ENCODE measurements at regions of chr12 and their contacts with region 1.

Region 1: GRCh38 chr12:27733052-27733656 is 22.5 kb downstream of the MRPS35 start:
- DNase-seq: no peak
- ATAC-seq: peak; percentile 83
- H3K4me3 ChIP-seq: no peak overlapping the region
- H3K27ac ChIP-seq: no peak overlapping the region
- H3K4me1 ChIP-seq: no peaks in the 10 kb centered on the region
- H3K27me3 ChIP-seq: no peaks in the 10 kb centered on the region
- CTCF ChIP-seq: peak; percentile 70 to 86 (median 81)
- EP300 ChIP-seq: no peak
- POLR2A ChIP-seq: no peak
- RAD21 ChIP-seq: peak; percentile 96

Region 2: GRCh38 chr12:27779920-27780611 is 46.9 kb after region 1 on chr12 and contains the starts of genes KLHL42 and MANSC4:
- CTCF ChIA-PET with region 1: interaction called, 4 read pairs
- POLR2A ChIA-PET with region 1: no interaction called
- RAD21 ChIA-PET with region 1: interaction called, 3 read pairs
- SMC1A ChIA-PET with region 1: no interaction called
- in situ Hi-C with region 1: no loop called
- intact Hi-C with region 1: loop called (anchors 1 kb)
- DNase-seq: no peak
- ATAC-seq: peak; percentile 86
- H3K4me3 ChIP-seq: peak within 1 kb of the TSS; percentile 96
- H3K27ac ChIP-seq: peak within 1 kb of the TSS; percentile 72
- H3K4me1 ChIP-seq: peaks cover 4% of the 10 kb centered on the region
- H3K27me3 ChIP-seq: no peaks in the 10 kb centered on the region
- CTCF ChIP-seq: peak; percentile 12 to 14 (median 13); a peak in 2 of 6 replicates
- EP300 ChIP-seq: no peak
- POLR2A ChIP-seq: peak; percentile 84
- RAD21 ChIP-seq: no peak
- polyA plus RNA-seq, gene KLHL42: 2.1 to 2.5 TPM
- polyA plus RNA-seq, gene MANSC4: 0.18 TPM in 1 of 2 experiments, not detected in the other

Region 3: DNA sequence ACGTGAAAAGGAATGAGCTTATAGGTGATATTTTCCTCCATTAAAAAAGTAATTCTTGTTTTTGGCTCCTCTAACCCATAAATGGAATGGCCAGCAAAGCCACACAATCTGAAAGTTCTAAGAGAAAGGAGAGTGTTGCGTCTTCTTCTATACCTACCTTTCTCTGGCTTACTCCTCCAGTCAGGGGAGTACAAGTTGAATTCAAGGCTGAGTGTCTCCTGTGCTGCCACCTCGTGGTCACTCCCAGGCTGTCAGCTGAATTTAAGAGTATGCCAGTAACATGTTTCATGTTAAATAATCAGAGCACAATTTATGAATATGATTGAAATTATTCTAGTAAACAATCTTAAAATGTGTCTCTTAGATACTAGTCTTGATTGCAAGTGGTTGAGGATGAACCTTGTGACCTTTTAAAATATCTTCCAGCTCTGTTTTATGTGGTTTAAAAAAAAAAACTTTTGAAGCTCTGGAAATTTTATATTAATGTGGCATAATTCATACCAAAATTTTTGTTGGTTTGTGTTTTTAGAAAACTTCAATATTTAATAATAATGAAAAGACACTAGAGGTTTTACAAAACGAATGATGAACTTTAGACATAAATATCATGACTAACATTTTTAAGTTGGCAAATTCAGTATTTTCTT is 207.7 kb after region 1 on chr12:
- CTCF ChIA-PET with region 1: interaction called, 101 read pairs
- POLR2A ChIA-PET with region 1: interaction called, 4 read pairs
- RAD21 ChIA-PET with region 1: interaction called, 32 read pairs
- SMC1A ChIA-PET with region 1: interaction called, 23 read pairs
- in situ Hi-C with region 1: loop called (anchors 5 kb)
- intact Hi-C with region 1: loop called (anchors 1 kb)
- DNase-seq: peak; percentile 60
- ATAC-seq: peak; percentile 98
- H3K4me3 ChIP-seq: no peak overlapping the region
- H3K27ac ChIP-seq: no peak overlapping the region
- H3K4me1 ChIP-seq: no peaks in the 10 kb centered on the region
- H3K27me3 ChIP-seq: no peaks in the 10 kb centered on the region
- CTCF ChIP-seq: peak; percentile 82 to 91 (median 87)
- EP300 ChIP-seq: no peak
- POLR2A ChIP-seq: no peak
- RAD21 ChIP-seq: peak; percentile 88

Region 4: DNA sequence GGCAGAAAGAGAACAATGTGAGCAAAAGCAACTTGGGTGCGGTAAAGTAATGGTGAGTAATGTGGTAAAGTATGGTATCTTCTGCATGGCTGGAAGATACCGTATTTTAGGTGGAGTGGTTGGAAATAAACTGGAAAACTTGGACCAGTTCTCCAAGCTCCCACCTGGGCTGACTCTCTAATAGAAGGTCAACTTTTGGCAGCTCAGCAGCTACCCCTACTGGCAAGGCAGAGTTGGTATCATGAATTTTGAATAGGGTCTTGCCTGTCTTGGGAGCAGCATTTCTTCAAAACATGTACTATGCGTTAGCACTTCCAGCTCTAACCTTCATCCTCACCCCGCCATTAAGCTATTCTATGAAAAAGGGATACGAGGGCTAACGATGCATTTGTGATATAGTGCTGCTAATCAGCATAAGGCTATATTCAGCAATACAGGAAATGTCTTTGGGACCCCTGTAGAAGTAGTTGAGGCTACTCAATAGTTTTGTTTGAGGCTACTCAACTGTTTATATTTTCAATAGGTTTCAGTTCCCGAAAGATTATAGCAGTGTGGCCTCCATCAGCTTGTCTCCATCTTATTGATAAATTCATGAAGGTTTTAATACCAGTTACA is 1139.6 kb after region 1 on chr12:
- CTCF ChIA-PET with region 1: interaction called, 7 read pairs
- POLR2A ChIA-PET with region 1: no interaction called
- RAD21 ChIA-PET with region 1: interaction called, 3 read pairs
- SMC1A ChIA-PET with region 1: interaction called, 4 read pairs
- in situ Hi-C with region 1: loop called (anchors 5 kb)
- intact Hi-C with region 1: loop called (anchors 2 kb)
- DNase-seq: no peak
- ATAC-seq: peak; percentile 76
- H3K4me3 ChIP-seq: no peak overlapping the region
- H3K27ac ChIP-seq: no peak overlapping the region
- H3K4me1 ChIP-seq: no peaks in the 10 kb centered on the region
- H3K27me3 ChIP-seq: no peaks in the 10 kb centered on the region
- CTCF ChIP-seq: peak; percentile 72 to 79 (median 74)
- EP300 ChIP-seq: no peak
- POLR2A ChIP-seq: no peak
- RAD21 ChIP-seq: peak; percentile 84

Region 5: GRCh38 chr12:28879379-28879778 is 1146.2 kb after region 1 on chr12:
- CTCF ChIA-PET with region 1: no interaction called
- POLR2A ChIA-PET with region 1: no interaction called
- RAD21 ChIA-PET with region 1: no interaction called
- SMC1A ChIA-PET with region 1: no interaction called
- in situ Hi-C with region 1: loop called (anchors 5 kb)
- intact Hi-C with region 1: no loop called
- DNase-seq: no peak
- ATAC-seq: peak; percentile 74
- H3K4me3 ChIP-seq: no peak overlapping the region
- H3K27ac ChIP-seq: no peak overlapping the region
- H3K4me1 ChIP-seq: no peaks in the 10 kb centered on the region
- H3K27me3 ChIP-seq: no peaks in the 10 kb centered on the region
- CTCF ChIP-seq: no peak
- EP300 ChIP-seq: no peak
- POLR2A ChIP-seq: no peak
- RAD21 ChIP-seq: no peak

Measured in GM12878 (cell line).